ENCODE measurements at regions of chr11 and their contacts with region 1.

Region 1: GRCh38 chr11:114970927-114971645 is 292.8 kb downstream of the NXPE2 start:
- DNase-seq: no peak
- ATAC-seq: peak; percentile 67 to 92 (median 90)
- H3K4me3 ChIP-seq: no peak overlapping the region
- H3K27ac ChIP-seq: peak overlapping the region in 7 of 12 donors; percentile 19 to 72 (median 52)
- H3K4me1 ChIP-seq: peaks cover 0 to 10% (median 0%) of the 10 kb centered on the region in 12 donors
- H3K27me3 ChIP-seq: no peaks in the 10 kb centered on the region
- CTCF ChIP-seq: no peak
- POLR2A ChIP-seq: no peak

Region 2: GRCh38 chr11:114774599-114775361 is 196.3 kb before region 1 on chr11:
- intact Hi-C with region 1: no loop called
- DNase-seq: peak in 4 of 5 donors; percentile 21 to 35 (median 26)
- ATAC-seq: peak; percentile 71 to 86 (median 80)
- H3K4me3 ChIP-seq: no peak overlapping the region
- H3K27ac ChIP-seq: peak overlapping the region in 1 of 12 donors; percentile 39
- H3K4me1 ChIP-seq: peaks cover 0 to 15% (median 8%) of the 10 kb centered on the region in 12 donors
- H3K27me3 ChIP-seq: no peaks in the 10 kb centered on the region
- CTCF ChIP-seq: peak; percentile 40 to 74 (median 58)
- POLR2A ChIP-seq: no peak

Region 3: DNA sequence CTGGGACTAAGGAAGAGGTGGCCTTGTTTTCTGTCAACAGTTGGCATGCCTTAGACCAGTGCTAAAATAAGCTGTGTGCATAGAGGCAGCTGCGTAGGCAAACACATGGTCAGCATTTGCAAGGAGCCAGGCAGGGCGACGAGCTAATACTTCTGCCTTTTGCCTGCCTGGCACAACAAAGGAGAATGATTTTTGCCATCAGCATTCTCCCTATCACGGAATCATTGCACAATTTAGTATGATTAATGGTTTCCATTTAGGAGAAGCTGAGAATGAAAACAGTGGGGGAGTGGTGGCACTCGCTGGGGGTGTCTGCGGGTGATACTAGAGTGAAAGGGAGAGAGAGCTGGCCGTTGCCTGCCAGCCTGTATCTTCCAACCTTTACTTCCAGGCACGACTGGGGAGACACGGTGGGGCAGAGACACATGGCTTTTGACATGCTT is 197.2 kb after region 1 on chr11:
- intact Hi-C with region 1: loop called in 1 of 10 experiments (anchors 5 kb)
- DNase-seq: peak in 4 of 5 donors; percentile 35 to 69 (median 51)
- ATAC-seq: peak; percentile 86 to 95 (median 94)
- H3K4me3 ChIP-seq: peak overlapping the region in 1 of 12 donors; percentile 10
- H3K27ac ChIP-seq: peak overlapping the region in 10 of 12 donors; percentile 30 to 78 (median 66)
- H3K4me1 ChIP-seq: peaks cover 0 to 16% (median 4%) of the 10 kb centered on the region in 12 donors
- H3K27me3 ChIP-seq: peaks cover 0 to 3% (median 0%) of the 10 kb centered on the region in 9 donors
- CTCF ChIP-seq: no peak
- POLR2A ChIP-seq: no peak

Measured in heart left ventricle (tissue), 16 donors.